ENCODE measurements at regions of chr17 and their contacts with region 1.

Region 1: DNA sequence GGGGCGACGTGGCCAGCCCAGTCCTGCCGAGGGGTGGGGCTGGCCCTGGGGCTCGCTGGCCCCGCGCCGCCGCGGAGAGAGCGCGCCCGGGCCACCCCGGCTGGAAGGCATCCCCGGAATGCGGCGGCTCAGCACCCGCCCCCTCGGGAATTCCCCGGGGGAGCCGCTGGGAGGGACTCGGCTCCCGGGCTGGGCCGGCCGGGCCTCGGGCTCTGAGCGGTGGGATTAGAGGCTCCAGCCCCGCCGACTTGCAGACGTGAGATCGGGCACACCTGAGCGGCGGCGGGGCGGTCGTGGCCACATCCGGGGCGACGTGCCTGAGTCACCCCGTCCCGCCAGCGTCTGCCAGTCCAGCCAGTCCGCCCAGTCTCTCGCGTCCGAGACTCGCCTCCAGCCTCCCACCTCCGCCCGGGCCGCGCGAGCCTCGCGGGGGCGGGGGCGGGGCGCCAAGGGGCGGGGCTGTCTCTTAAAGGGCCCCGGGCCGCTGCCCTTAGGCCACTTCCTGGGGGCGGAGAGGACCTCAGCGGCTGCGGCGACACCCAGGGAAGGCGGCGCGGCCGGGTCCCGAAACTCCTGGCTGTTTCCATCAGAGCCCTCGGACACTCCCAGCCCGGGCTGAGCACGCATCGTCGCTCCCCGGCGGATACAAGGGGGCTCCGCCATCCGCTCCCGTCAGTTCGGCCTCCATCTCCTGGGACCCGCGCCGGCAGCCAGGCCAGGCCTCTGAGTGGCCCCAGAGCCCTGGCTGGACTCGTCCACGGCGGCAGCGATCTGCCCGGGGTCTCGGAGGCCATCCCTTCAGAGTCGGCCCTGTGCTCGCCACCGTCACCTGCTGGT is at the start of gene KCTD11:
- DNase-seq: peak; percentile 87
- ATAC-seq: peak; percentile 48
- H3K4me3 Mint-ChIP-seq: peak within 1 kb of the TSS; percentile 91
- H3K27ac Mint-ChIP-seq: peak within 1 kb of the TSS; percentile 92
- H3K4me1 Mint-ChIP-seq: peaks cover 34% of the 10 kb centered on the region
- H3K27me3 Mint-ChIP-seq: no peaks in the 10 kb centered on the region
- total RNA-seq, gene KCTD11: 8.1 to 8.7 TPM

Region 2: DNA sequence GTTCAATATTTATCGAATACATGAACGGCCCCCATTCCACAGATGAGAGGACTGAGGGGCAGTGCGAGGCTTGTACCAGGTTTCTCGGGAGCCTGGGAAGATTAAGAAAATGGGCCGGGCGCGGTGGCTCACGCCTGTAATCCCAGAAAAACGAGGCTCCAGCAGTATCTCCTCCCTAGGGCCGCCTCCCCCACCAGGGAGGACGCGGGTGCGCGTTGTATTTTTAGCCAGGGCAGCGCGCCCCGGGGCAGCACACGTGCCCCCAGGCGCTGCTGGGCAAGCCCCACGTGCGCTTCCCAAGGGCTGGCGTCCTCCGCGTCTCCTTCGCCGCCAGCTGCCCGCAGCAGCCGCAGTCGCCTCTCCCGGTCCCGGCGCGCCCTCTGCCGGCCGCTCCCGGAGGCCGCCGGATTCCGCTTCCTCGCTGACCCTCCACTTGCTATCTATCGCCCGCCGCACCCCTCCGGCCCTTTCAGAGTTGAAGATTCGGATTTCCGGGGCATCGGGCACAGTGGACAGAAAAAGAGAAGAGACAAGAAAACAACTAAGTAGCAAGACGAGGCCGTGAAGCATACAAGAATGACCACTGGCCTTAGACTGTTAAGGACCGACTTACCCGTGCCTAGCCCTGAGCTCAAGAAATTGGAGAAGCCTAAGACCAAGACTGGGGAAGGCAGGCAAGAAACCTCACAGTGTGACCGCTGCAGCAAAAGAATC is 55.5 kb before region 1 on chr17:
- POLR2A ChIA-PET with region 1: no interaction called
- DNase-seq: peak; percentile 82
- ATAC-seq: peak; percentile 31
- H3K4me3 Mint-ChIP-seq: peak overlapping the region; percentile 55
- H3K27ac Mint-ChIP-seq: no peak overlapping the region
- H3K4me1 Mint-ChIP-seq: peaks cover 20% of the 10 kb centered on the region
- H3K27me3 Mint-ChIP-seq: peaks cover 43% of the 10 kb centered on the region

Region 3: GRCh38 chr17:7314719-7315569 is 36.9 kb before region 1 on chr17 and contains the start of gene GPS2:
- POLR2A ChIA-PET with region 1: interaction called, 13 read pairs
- DNase-seq: peak; percentile 97
- ATAC-seq: peak; percentile 86
- H3K4me3 Mint-ChIP-seq: peak within 1 kb of the TSS; percentile 93
- H3K27ac Mint-ChIP-seq: peak within 1 kb of the TSS; percentile 95
- H3K4me1 Mint-ChIP-seq: peaks cover 31% of the 10 kb centered on the region
- H3K27me3 Mint-ChIP-seq: no peaks in the 10 kb centered on the region
- total RNA-seq, gene GPS2: 97.1 to 98.5 TPM

Region 4: GRCh38 chr17:7329374-7329996 is 22.4 kb before region 1 on chr17:
- POLR2A ChIA-PET with region 1: interaction called, 22 read pairs
- DNase-seq: peak; percentile 94
- ATAC-seq: peak; percentile 59
- H3K4me3 Mint-ChIP-seq: peak overlapping the region; percentile 88
- H3K27ac Mint-ChIP-seq: peak overlapping the region; percentile 93
- H3K4me1 Mint-ChIP-seq: peaks cover 26% of the 10 kb centered on the region
- H3K27me3 Mint-ChIP-seq: no peaks in the 10 kb centered on the region

Region 5: GRCh38 chr17:7336240-7337175 is 15.4 kb before region 1 on chr17 and contains the start of gene ACAP1:
- POLR2A ChIA-PET with region 1: interaction called, 112 read pairs
- DNase-seq: peak; percentile 85
- ATAC-seq: peak; percentile 90
- H3K4me3 Mint-ChIP-seq: peak within 1 kb of the TSS; percentile 97
- H3K27ac Mint-ChIP-seq: peak within 1 kb of the TSS; percentile 96
- H3K4me1 Mint-ChIP-seq: peaks cover 43% of the 10 kb centered on the region
- H3K27me3 Mint-ChIP-seq: no peaks in the 10 kb centered on the region
- total RNA-seq, gene ACAP1: 710 to 756 TPM

Region 6: DNA sequence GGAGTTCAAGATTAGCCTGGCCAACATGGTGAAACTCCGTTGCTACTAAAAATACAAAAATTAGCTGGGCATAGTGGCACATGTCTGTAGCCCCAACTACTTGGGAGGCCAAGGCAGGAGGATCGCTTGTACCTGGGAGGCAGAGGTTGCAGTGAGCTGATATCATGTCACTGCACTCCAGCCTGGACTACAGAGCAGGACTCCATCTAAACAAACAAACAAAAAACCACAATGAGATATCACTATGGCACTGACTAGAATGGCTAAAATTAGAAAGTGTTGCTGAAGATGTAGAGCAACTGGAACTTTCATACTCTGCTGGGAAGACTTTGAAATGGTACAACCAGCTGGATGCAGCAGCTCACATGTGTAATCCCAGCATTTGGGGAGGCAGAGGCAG is 22.5 kb after region 1 on chr17:
- POLR2A ChIA-PET with region 1: no interaction called
- DNase-seq: no peak
- ATAC-seq: no peak
- H3K4me3 Mint-ChIP-seq: no peak overlapping the region
- H3K27ac Mint-ChIP-seq: no peak overlapping the region
- H3K4me1 Mint-ChIP-seq: no peaks in the 10 kb centered on the region
- H3K27me3 Mint-ChIP-seq: peaks cover 15% of the 10 kb centered on the region

Region 7: DNA sequence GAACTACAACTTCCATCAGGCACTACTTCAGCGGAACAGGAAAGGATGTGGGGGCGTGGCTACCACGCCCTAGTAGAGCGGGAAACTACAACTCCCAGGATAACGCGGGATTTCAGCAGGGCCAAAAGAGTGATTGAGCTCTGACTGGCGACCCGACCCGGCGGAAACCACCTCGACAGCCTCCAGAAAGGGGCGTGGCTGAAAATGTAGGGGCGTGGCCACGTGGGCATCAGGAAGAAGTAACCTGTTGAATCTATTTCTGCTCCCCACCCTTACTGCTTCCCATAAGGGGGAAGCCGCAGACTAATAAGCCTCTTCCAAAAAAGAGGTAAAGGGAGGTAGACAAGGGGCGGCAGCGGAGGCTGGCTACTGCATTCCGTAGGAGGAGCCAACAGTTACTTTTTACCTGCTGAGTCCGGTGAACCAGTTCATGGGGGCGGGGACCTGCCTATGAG is 83.4 kb after region 1 on chr17 and contains the start of gene TMEM102:
- POLR2A ChIA-PET with region 1: interaction called, 12 read pairs
- DNase-seq: peak; percentile 98
- ATAC-seq: peak; percentile 65
- H3K4me3 Mint-ChIP-seq: peak within 1 kb of the TSS; percentile 96
- H3K27ac Mint-ChIP-seq: peak within 1 kb of the TSS; percentile 96
- H3K4me1 Mint-ChIP-seq: peaks cover 18% of the 10 kb centered on the region
- H3K27me3 Mint-ChIP-seq: no peaks in the 10 kb centered on the region
- total RNA-seq, gene TMEM102: 15.7 to 17.7 TPM

Region 8: GRCh38 chr17:7477392-7478275 is 125.8 kb after region 1 on chr17:
- POLR2A ChIA-PET with region 1: no interaction called
- DNase-seq: no peak
- ATAC-seq: peak; percentile 5
- H3K4me3 Mint-ChIP-seq: peak overlapping the region; percentile 95
- H3K27ac Mint-ChIP-seq: peak overlapping the region; percentile 89
- H3K4me1 Mint-ChIP-seq: peaks cover 47% of the 10 kb centered on the region
- H3K27me3 Mint-ChIP-seq: no peaks in the 10 kb centered on the region

Measured in activated naive CD8-positive, alpha-beta T cell treated with anti-CD3 and anti-CD28 coated beads, Interleukin-2, amount 10 ng/mL, durations not matched to agents 7 days and 5 days (primary cell).